ENCODE measurements at regions of chrX and their contacts with region 1.

Region 1: GRCh38 chrX:7242613-7243012 is 94.7 kb upstream of the PUDP start:
- DNase-seq: no peak
- ATAC-seq: no peak
- H3K4me3 Mint-ChIP-seq: no peak overlapping the region
- H3K27ac Mint-ChIP-seq: no peak overlapping the region
- H3K4me1 Mint-ChIP-seq: peaks cover 8% of the 10 kb centered on the region
- H3K27me3 Mint-ChIP-seq: no peaks in the 10 kb centered on the region
- CTCF ChIP-seq: no peak

Region 2: GRCh38 chrX:7261672-7262332 is 19.2 kb after region 1 on chrX:
- CTCF ChIA-PET with region 1: no interaction called
- POLR2A ChIA-PET with region 1: no interaction called
- intact Hi-C with region 1: loop called (anchors 2 kb)
- DNase-seq: no peak
- ATAC-seq: peak; percentile 62
- H3K4me3 Mint-ChIP-seq: peak overlapping the region; percentile 64
- H3K27ac Mint-ChIP-seq: peak overlapping the region; percentile 89
- H3K4me1 Mint-ChIP-seq: peaks cover 39% of the 10 kb centered on the region
- H3K27me3 Mint-ChIP-seq: no peaks in the 10 kb centered on the region
- CTCF ChIP-seq: no peak

Measured in activated B cell treated with CpG ODN at 0.5 μM for 24 hours (primary cell).